ENCODE measurements at regions of chr17 and their contacts with region 1.

Region 1: GRCh38 chr17:79839363-79840268 is at the start of gene CBX4:
- DNase-seq: peak; percentile 95

Region 2: DNA sequence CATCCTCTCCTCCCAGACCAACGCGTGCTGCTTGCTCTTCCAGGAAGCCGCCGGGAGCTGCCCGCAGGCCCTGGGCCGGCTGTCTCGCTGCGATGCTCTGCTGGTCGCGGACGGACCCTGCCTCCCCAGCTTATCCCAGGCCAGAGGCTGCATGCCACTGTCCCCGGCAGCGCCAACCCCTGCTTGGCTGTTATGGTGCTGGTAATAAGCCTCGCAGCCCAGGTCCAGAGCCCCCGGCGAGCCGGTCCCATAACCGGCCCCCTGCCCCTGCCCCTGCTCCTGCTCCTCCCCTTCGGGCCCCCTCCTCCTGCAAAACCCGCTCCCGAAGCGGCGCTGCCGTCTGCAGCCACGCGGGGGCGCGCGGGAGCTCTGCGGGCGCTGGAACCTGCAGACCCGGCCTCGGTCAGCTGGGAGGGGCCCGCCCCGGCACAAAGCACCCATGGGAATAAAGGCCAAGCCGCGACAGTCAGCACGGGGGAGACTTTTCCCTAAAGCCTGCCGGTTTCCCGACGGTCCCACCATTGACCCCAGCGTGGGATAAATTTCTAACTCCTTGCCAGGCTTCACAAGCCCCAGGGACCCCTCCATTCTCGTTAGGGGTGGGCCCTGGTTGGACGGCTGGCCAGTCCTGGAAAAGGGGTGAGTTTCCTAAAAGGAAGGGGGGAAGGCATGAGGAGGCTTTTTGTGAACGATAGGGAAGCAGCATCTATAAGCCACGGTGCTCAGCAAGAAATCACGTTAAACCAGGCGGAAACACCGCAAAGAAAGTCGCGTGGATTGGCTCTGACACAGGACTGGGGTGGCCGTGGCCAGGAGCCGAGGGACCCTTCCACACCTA is 97.6 kb before region 1 on chr17:
- CTCF ChIA-PET with region 1: interaction called, 11 read pairs
- POLR2A ChIA-PET with region 1: no interaction called
- DNase-seq: peak; percentile 94

Region 3: GRCh38 chr17:79796763-79797491 is 42.7 kb before region 1 on chr17 and contains the start of gene CBX8:
- CTCF ChIA-PET with region 1: interaction called, 6 read pairs
- POLR2A ChIA-PET with region 1: interaction called, 30 read pairs
- DNase-seq: peak; percentile 99

Region 4: DNA sequence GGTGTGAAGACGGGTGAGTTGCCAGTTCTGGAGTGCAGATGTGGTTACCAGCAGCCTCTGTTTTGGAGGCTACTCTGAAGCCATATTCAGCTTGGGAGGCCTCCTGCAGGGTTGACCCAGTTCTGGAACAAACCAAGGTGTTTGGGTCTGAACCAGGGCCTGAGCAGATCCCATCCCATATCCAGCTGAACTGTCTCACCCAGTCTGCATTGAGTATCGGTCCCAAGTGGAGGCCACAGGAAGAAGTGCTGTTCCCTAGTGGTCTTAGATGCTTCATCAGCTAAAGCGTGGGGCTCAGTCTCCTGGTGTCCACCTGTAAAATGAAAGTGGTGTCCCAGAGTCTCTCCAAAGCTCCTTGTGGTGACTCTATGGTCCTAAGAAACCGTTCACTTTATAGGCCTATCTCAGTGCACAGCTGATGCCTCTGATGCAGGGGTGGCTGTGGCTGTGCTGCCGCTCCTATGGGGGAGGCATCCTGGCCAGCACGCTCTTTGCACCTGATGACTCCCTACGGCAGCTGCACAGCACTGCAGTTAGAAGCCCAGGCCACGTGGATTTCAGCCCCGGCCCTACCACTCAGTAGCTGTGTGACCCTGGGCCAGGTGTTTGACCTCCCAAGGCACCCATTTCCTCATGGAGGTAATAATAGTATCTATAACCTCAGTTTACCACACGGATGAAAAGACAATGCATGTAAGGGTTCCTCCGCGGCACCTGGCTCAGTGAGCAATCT is 21.4 kb before region 1 on chr17:
- CTCF ChIA-PET with region 1: interaction called, 9 read pairs
- POLR2A ChIA-PET with region 1: interaction called, 58 read pairs
- DNase-seq: no peak

Region 5: DNA sequence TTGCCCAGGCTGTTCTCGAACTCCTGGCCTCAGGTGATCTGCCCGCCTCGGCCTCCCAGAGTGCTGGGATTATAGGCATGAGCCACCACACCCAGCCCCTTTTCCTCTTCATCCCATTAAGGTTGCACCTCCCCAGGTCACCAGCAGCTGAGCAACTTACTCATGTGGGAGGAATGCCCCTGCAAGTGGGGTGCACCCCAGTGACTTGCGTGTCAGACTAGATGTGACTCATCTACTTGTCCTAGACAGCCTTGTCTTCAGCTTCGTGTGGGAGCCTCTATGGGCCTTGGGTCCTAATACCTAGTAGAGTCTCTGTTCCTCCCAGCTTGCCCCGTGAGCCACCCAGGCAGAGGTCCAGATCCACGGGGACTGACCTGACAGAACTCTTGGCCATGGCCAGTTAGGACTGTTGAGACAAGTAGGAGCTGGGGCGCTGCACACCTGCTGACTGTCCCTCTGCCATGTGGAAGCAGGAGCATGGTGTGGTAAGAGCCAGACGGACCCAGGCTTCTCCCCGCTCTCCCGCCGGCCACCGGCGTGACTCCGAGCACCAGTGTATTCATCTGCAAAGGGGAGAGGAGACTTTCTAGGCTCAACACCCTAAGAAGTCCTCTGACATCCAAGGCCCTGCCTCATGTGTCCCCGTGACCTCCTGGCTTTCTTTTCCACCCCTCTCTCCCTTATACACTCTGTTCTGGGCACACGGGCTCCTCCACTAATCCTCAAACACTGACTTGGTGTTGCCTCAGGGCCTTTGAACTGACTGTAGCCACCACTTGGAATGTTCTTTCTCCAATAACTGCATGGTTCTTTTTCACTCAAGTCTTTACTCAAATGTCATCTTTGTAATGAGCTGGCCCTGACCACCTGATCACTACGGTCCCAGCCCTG is 11.2 kb after region 1 on chr17:
- CTCF ChIA-PET with region 1: interaction called, 10 read pairs
- POLR2A ChIA-PET with region 1: interaction called, 10 read pairs
- DNase-seq: no peak

Measured in HEK293T (cell line).